ENCODE measurements at regions of chr5 and their contacts with region 1.

Region 1: DNA sequence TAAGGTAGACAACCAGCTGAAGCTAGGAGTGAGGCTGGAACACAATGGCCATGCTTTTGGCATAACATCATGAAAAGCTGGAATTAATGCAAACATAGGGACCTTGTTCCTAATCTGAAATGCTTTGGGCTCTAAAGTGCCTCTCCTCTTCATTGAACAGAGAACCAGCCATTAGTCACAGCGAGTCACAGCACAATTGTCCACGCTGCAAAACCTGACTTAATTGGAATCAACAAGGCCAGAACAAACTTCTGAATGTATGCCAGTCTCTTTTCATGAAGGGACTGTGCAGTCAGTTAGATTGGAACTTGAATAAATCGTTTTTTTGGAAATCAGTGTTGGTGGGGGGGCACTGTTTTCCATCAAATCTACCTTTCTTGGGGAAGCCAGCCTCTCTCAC is 96.5 kb downstream of the JAKMIP2 start:
- DNase-seq: no peak

Region 2: DNA sequence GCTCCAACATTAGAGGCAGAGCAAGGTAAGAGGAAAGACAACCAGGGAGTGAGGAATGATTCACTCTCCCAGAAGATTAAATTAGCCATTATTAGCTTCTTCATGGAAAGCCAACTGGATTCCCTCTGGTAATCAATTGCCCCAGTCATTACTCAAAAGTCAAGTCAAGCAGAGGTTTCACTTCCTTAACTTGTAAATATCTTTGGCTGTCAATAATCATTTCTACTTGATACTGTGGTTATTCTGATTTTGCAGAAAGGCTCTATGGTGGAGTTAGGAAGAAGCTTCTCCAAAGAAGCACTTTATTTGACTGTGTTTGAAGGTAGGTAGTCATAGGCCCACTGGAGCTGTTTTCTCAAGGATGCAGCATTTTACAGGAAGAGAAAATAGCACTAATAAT is 18.6 kb after region 1 on chr5:
- intact Hi-C with region 1: loop called in 1 of 2 experiments (anchors 1 kb)
- DNase-seq: no peak